Heart left ventricle (tissue), 16 donors: ENCODE measurements at regions of chr5 and their contacts with region 1.

Region 1: DNA sequence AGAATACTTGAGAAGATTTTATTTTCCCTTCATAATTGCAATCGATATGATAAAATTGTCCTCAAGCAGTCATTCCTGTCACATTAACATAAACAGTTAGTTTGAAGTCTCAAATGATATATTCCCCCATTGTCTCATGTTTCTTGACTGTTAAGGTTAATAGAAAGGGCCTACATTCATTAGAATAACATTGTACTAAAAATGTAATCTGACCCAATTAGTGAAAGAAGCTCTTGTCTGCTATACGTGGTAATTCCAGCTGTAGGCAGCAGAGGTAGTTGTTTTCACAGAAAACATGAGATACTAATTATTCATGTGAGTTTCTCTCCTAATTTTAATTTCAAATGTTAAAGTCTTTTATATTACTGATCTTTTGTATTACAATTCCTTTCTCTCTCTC is 25.9 kb upstream of the AP3B1 start:
- DNase-seq: no peak
- ATAC-seq: no peak
- H3K4me3 ChIP-seq: no peak overlapping the region
- H3K27ac ChIP-seq: no peak overlapping the region
- H3K4me1 ChIP-seq: no peaks in the 10 kb centered on the region
- H3K27me3 ChIP-seq: no peaks in the 10 kb centered on the region
- CTCF ChIP-seq: peak; percentile 44 to 71 (median 58)
- POLR2A ChIP-seq: no peak

Region 2: DNA sequence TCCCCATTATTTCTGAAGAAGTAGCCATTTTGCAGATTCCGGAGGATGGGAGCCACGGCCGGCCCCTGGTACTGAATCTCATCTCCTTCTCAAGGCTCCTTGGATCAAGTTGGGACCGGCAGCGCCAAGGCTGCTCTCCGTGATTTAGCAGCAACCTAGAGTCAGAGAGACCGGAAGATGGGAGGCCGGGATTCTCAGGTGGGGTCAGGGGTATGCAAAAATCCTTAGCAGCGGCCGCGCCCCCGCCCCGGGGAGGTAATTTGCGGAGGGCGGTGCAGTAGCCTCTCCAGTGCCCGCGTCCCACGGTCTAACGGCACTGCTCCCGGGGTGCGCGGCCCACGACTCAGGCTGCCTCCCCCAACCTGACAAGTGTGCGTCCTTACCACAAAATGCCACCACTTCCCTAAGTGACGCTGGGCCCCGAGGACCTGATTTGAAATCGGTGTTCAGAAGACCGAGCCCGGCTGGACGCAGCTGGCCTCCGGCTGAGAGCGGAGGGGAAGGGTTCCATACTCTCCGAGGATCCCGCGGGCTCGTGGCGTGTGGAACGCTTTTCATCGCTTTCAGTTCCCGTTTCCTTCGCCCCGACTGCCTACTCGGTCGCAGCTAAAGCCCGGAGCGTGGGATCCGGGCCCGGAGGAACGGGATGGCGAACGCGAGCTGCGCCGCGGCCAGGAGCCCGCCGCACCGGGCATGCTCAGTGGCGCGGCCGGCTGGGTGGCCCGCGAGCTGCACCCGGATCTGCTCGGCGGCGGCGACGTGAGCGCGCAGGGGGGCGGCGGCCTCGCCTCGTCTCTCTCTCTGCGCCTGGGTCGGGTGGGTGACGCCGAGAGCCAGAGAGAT is 39.7 kb after region 1 on chr5 and contains the start of gene SCAMP1:
- intact Hi-C with region 1: loop called in 1 of 10 experiments (anchors 5 kb)
- DNase-seq: peak; percentile 92 to 96 (median 93)
- ATAC-seq: peak; percentile 92 to 98 (median 98)
- H3K4me3 ChIP-seq: peak within 1 kb of the TSS; percentile 76 to 97 (median 89)
- H3K27ac ChIP-seq: peak within 1 kb of the TSS; percentile 69 to 95 (median 92)
- H3K4me1 ChIP-seq: peaks cover 0 to 29% (median 24%) of the 10 kb centered on the region in 12 donors
- H3K27me3 ChIP-seq: no peaks in the 10 kb centered on the region
- CTCF ChIP-seq: peak; percentile 14 to 67 (median 51)
- POLR2A ChIP-seq: peak in 1 of 2 donors; percentile 67
- total RNA-seq, gene SCAMP1: 18.9 to 40.6 (median 37.6) TPM

Region 3: DNA sequence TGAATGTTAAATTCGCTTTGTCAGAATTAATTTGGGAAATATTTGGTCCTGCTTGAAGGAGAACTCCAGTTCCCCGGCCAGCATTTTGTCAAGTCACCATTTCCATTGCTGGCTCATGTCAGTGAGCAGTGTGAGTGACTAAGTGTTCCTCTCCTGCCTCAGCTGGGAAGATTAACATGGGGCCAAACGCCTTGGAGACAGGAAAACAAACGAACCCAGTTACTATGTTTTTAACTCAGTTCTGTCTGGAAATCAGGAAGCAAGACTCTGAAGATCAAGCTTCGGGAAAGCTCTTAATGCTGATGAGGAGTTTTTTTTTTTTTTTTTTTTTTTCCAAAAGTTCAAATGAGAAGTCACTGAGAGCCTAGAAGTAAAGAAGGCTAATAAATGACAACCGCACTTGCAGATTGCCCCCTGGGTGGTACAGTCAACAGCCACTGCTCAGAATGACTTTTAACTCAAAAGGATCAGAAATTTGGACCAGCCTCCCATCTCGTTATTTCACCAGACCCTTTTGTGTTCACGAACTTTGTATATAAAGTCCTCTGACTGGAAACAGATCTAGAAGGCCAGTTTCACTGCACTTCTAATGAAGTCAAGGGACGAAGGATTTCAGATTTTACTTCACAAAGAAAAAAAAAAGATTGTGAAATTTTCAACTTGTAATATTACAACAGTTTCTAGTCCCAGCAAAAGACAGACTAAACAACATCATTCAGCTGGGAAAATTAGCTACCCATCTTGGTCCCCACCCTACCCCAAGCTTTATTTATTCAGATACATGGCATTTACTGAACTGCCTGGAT is 206.9 kb after region 1 on chr5:
- intact Hi-C with region 1: loop called in 2 of 10 experiments (anchors 10 kb)
- DNase-seq: peak in 4 of 5 donors; percentile 79 to 82 (median 80)
- ATAC-seq: peak; percentile 89 to 94 (median 91)
- H3K4me3 ChIP-seq: peak overlapping the region in 1 of 12 donors; percentile 20
- H3K27ac ChIP-seq: peak overlapping the region in 11 of 12 donors; percentile 2 to 82 (median 58)
- H3K4me1 ChIP-seq: peaks cover 0 to 79% (median 32%) of the 10 kb centered on the region in 12 donors
- H3K27me3 ChIP-seq: no peaks in the 10 kb centered on the region
- CTCF ChIP-seq: no peak
- POLR2A ChIP-seq: no peak

Region 4: GRCh38 chr5:78964887-78965286 is 644.5 kb after region 1 on chr5:
- intact Hi-C with region 1: loop called in 6 of 10 experiments (anchors 2 to 10 kb)
- DNase-seq: no peak
- ATAC-seq: peak; percentile 71 to 86 (median 81)
- H3K4me3 ChIP-seq: no peak overlapping the region
- H3K27ac ChIP-seq: no peak overlapping the region
- H3K4me1 ChIP-seq: no peaks in the 10 kb centered on the region
- H3K27me3 ChIP-seq: no peaks in the 10 kb centered on the region
- CTCF ChIP-seq: peak in 11 of 12 donors; percentile 36 to 69 (median 61)
- POLR2A ChIP-seq: no peak